Activated CD4-positive, alpha-beta T cell treated with anti-CD3 and anti-CD28 coated beads, Interleukin-2, amount 10 ng/mL, durations not matched to agents 24 days and 14 days (primary cell): ENCODE measurements at regions of chr1 and their contacts with region 1.

Region 1: GRCh38 chr1:230212405-230212936 is 145.4 kb downstream of the GALNT2 start:
- DNase-seq: peak; percentile 73
- H3K4me3 Mint-ChIP-seq: peak overlapping the region; percentile 52
- H3K27ac Mint-ChIP-seq: peak overlapping the region; percentile 91
- H3K4me1 Mint-ChIP-seq: peaks cover 67% of the 10 kb centered on the region
- H3K27me3 Mint-ChIP-seq: no peaks in the 10 kb centered on the region

Region 2: DNA sequence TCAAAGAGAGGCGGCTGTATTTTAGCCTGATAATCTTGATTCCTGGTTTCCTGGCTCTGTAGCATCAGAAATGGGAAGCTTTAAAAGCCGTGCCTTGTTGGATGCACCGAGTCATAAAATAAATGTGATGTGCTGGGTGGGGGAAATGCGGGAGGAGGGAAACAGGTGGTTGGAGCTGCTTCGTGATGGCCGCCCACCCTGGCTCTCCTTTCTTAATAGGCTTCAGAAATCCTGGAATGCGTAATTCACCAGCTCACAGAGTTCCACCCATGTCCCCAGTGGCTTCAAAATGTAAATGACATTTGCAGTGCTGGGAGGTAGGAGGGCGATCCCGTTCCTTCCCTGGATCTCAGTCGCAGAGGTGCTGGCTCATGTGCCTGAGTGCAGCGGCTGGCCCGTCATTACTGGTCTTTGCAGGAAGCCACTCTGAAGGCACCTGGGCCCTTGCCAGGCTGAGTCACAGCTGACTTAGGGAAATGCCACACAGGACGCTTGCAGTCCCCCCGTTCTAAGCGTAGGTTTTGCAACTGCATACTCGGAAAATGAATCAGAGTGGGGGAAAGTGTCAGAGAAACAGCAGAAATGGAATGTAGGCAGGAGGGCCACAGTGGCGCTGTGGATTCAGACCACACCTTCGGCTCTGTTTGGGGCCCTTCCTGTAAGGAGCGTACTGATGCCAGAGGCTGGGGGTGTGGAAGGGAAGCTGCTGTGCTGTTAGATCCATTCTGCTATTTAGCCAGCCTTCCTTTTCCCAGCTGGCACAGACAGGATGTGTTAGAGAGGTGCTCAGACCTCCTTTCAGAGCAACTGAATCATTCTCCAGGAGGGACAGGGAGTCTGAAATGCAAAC is 107.9 kb before region 1 on chr1:
- intact Hi-C with region 1: loop called (anchors 1 kb)
- DNase-seq: peak; percentile 84
- H3K4me3 Mint-ChIP-seq: peak overlapping the region; percentile 77
- H3K27ac Mint-ChIP-seq: peak overlapping the region; percentile 88
- H3K4me1 Mint-ChIP-seq: peaks cover 81% of the 10 kb centered on the region
- H3K27me3 Mint-ChIP-seq: no peaks in the 10 kb centered on the region

Region 3: DNA sequence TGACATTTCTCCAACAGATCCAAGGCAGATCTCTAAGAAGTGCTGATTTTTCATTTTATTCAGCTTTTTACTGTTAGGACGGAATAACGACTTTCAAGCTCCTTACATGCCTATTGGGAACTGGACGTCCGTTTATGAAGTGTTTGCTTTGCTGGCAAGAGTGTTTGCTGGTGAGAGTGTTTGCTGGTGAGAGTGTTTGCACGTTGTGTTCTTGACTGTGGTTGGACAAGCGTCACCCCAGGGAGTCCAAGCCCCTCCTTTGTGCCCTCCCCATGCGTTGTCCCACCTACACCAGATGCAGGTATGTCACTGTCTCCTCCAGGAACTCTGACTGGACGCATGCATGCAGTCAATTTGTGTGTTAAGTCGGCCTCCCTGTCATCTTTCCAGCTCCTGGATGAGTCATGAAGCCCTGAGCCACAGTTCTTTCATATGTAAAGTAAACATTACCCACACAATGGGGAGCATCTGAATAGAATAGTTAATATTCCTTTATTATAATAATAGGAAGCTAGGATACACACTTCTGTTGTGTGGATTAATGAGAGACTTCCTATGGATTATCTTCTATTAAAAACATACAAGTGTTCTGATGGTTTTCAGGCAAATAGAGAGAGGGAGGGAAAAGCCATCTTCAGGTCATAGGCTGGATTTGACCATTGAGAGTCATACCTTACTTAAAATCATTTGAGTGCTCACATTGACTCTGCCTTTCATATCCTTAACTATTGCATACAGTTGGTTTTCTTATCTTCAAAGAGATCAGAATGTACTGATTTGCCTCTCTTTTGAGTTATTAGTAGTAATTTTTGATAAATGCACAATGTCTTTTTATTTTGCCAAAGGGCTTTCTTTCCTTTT is 26.2 kb before region 1 on chr1:
- intact Hi-C with region 1: loop called (anchors 1 kb)
- DNase-seq: no peak
- H3K4me3 Mint-ChIP-seq: peak overlapping the region; percentile 36
- H3K27ac Mint-ChIP-seq: peak overlapping the region; percentile 80
- H3K4me1 Mint-ChIP-seq: peaks cover 48% of the 10 kb centered on the region
- H3K27me3 Mint-ChIP-seq: no peaks in the 10 kb centered on the region

Region 4: GRCh38 chr1:230251644-230252191 is 39.2 kb after region 1 on chr1:
- intact Hi-C with region 1: loop called (anchors 1 kb)
- DNase-seq: no peak
- H3K4me3 Mint-ChIP-seq: no peak overlapping the region
- H3K27ac Mint-ChIP-seq: peak overlapping the region; percentile 82
- H3K4me1 Mint-ChIP-seq: peaks cover 20% of the 10 kb centered on the region
- H3K27me3 Mint-ChIP-seq: no peaks in the 10 kb centered on the region

Region 5: DNA sequence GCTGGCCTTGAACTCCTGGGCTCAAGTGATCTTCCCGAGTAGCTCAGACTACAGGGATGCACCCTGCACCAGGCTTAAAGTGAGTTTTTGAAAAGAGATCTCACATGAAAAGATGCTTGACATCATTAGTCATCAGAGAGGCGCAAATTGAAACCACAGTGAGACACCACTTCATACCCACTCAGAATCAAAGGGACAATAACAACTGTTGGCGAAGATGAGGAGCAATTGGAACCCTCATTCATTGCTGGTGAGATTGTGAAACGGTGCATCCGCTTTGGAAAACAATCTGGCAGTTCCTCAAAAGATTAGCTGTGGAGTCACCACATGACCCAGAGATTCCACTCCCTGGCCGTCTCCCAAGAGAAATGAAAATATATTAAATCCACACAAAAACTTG is 91.4 kb after region 1 on chr1:
- intact Hi-C with region 1: loop called (anchors 1 kb)
- DNase-seq: no peak
- H3K4me3 Mint-ChIP-seq: no peak overlapping the region
- H3K27ac Mint-ChIP-seq: peak overlapping the region; percentile 2
- H3K4me1 Mint-ChIP-seq: peaks cover 19% of the 10 kb centered on the region
- H3K27me3 Mint-ChIP-seq: no peaks in the 10 kb centered on the region